AG04450 (cell line): ENCODE measurements at regions of chr14 and their contacts with region 1.

Region 1: DNA sequence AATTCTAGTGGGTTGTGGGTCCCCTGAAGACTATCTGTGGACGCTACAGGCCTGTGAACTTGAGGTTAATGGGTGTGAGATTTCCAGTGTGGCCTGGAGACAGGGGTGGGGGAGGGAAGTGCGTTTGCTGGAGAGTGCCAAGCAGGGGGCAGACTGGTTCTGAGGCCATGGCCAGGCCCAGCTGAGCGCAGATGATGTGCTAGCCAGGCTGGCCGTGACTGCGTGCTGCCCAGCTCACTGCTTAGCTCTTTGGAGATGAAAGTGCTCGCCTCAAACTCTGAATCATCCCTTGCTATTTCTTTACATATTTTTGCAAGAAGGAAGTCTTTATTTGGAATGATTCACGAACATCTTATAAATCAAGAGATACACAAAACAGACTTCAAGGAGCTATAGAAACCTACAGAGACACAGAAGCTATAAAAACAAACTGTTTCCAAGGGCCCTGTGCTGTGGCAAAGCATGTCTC is 75.2 kb upstream of the PLEKHG3 start:
- DNase-seq: peak; percentile 87
- H3K4me3 ChIP-seq: no peak overlapping the region
- H3K27ac ChIP-seq: peak overlapping the region; percentile 97
- H3K27me3 ChIP-seq: no peaks in the 10 kb centered on the region
- CTCF ChIP-seq: peak; percentile 17; the same call in 1 of the 2 replicates

Region 2: GRCh38 chr14:64421166-64421565 is 207.8 kb before region 1 on chr14:
- CTCF ChIA-PET with region 1: no interaction called
- POLR2A ChIA-PET with region 1: no interaction called
- DNase-seq: no peak
- H3K4me3 ChIP-seq: no peak overlapping the region
- H3K27ac ChIP-seq: no peak overlapping the region
- H3K27me3 ChIP-seq: no peaks in the 10 kb centered on the region
- CTCF ChIP-seq: no peak

Region 3: DNA sequence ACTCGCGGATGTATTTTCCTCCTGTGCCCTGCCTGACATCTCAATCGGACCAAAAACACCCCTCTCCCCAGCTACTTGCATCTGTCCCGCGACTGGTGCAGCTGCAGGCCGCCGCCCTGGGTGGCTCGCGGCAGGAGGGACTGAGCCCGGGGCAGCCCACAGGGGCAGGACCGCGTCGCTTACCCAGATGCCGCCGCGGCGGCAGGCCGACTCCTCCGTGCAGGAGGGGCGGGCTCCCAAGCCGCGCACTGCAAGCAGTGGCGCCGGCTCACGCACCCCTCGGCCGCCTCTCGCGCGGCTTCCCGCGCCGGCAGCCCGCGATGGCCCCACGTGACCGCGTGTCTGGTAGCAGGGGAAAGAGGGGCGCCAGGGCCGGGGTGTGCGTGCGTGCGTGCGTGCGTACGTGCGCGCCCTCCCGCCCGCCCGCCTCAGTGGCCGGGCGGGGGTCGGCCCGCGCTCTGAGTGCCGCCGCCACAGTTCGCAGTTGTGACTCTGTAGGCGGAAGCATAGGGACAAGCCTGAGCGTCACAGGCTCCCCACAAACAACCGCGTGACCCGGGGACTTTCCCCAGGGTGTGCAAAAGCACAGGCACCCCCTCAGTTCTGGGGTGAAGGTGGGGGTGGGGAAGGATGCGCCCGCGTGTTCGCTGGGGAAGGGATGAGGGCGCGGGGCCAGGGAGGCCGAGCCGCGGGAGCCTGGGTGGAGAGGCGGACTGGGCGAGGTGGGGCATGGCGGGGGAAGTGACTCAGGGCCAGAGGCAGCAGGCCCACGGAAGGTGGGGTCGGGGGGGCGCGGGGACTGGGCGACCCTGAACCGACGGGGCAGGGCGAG is 125.3 kb before region 1 on chr14 and contains the start of gene ZBTB25:
- CTCF ChIA-PET with region 1: no interaction called
- POLR2A ChIA-PET with region 1: interaction called, 10 read pairs
- DNase-seq: peak; percentile 78
- H3K4me3 ChIP-seq: peak within 1 kb of the TSS; percentile 82
- H3K27ac ChIP-seq: peak within 1 kb of the TSS; percentile 99
- H3K27me3 ChIP-seq: no peaks in the 10 kb centered on the region
- CTCF ChIP-seq: no peak
- polyA plus RNA-seq, gene ZBTB25: 6.3 and 7.3 TPM in 2 replicates

Region 4: DNA sequence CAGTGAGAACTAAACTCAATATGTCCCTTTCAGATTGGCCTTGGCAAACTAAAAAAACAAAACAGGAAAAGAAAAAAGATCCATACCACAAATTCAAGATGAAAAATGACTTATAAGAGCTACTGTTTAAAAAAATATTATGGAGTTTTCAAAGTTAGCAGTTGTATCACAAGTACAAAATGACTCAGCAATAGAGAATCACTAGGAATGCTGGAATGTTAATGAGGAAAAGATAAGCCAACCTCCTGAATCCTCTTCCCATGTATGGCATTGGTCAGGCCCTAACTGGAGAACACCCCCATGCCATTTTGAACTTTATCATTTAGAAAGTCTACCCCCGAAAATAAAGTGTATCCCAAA is 17.0 kb before region 1 on chr14:
- CTCF ChIA-PET with region 1: interaction called, 3 read pairs
- POLR2A ChIA-PET with region 1: interaction called, 24 read pairs
- DNase-seq: peak; percentile 61
- H3K4me3 ChIP-seq: no peak overlapping the region
- H3K27ac ChIP-seq: peak overlapping the region; percentile 88
- H3K27me3 ChIP-seq: no peaks in the 10 kb centered on the region
- CTCF ChIP-seq: no peak

Region 5: GRCh38 chr14:64645220-64645892 is 16.4 kb after region 1 on chr14:
- CTCF ChIA-PET with region 1: interaction called, 3 read pairs
- POLR2A ChIA-PET with region 1: interaction called, 10 read pairs
- DNase-seq: peak; percentile 89
- H3K4me3 ChIP-seq: peak overlapping the region; percentile 13; the same call in 1 of the 2 replicates
- H3K27ac ChIP-seq: peak overlapping the region; percentile 98
- H3K27me3 ChIP-seq: no peaks in the 10 kb centered on the region
- CTCF ChIP-seq: no peak